Activated B cell treated with CpG ODN at 0.5 μM for 24 hours (primary cell): ENCODE measurements at regions of chr12 and their contacts with region 1.

Region 1: DNA sequence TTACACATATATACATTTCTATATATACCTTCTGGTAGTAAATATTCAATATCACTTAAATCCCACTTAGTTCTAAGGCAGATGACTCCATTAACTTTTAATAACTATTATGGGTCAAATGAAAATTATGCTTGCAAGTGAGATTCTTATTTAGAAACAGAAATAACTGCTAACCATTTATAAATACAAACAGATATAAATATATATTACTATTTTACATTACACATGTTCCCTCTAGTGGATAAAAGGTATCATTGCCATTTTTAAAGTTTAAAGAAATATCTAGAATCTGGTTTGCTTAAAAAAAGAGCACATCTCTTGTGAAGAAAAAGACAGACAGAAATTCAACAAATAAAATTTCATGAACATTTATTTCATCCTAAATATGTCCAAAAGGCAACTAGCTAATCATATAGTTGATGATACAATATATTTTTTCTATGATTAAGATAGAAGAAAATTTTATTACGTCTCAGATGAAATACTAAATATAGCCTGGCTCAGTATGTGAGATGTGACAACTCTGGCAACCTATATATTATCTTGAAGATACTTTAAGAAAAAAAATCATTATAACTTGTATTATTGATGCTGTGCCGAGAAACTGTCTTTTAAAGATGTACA is 11.7 kb upstream of the RAD51AP1 start:
- DNase-seq: no peak
- ATAC-seq: no peak
- H3K4me3 Mint-ChIP-seq: no peak overlapping the region
- H3K27ac Mint-ChIP-seq: no peak overlapping the region
- H3K4me1 Mint-ChIP-seq: no peaks in the 10 kb centered on the region
- H3K27me3 Mint-ChIP-seq: no peaks in the 10 kb centered on the region
- CTCF ChIP-seq: peak; percentile 97

Region 2: DNA sequence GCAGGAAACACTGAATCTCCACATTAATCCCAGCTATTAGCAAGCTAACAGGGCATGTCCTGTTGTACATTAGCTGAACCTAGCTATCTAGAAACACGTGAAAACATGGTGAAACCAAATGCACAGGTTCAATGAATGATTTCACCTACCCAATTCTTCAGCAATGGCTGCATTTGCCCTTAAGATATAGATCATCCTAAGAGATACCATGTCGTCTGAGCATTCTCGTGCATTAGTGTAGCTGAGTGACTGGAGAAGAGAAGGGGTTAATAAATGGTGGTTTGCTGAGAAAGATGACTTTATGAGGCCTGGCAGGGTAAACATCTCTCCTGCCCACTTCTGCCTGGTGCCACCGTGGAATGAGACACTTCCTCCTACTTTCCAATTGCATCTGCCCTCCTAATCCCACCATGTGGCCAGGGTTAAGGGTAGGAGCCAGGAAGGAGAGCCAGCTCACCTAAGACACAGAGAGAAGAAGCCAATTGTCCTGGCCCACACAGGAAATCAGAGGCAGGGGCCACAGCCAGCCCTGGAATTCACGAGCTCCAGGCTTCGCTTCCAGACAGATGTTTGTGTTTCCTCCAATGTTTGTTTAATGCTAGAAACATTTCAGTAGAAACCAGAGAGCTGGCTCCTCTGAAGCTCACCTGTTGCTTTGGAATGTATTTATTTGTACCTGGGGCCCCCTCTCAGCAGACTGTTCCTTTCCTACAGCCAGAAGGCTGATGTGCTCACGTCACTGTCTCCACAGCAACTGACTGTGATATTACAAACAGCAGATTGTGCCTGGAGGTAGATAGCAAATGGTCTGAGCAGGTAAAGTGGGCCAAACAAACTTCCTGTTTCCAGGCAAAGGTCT is 527.8 kb before region 1 on chr12:
- CTCF ChIA-PET with region 1: interaction called, 3 read pairs
- POLR2A ChIA-PET with region 1: no interaction called
- intact Hi-C with region 1: loop called (anchors 5 kb)
- DNase-seq: no peak
- ATAC-seq: no peak
- H3K4me3 Mint-ChIP-seq: no peak overlapping the region
- H3K27ac Mint-ChIP-seq: no peak overlapping the region
- H3K4me1 Mint-ChIP-seq: peaks cover 4% of the 10 kb centered on the region
- H3K27me3 Mint-ChIP-seq: peaks cover 6% of the 10 kb centered on the region
- CTCF ChIP-seq: no peak

Region 3: GRCh38 chr12:4307593-4308333 is 219.3 kb before region 1 on chr12:
- CTCF ChIA-PET with region 1: no interaction called
- POLR2A ChIA-PET with region 1: no interaction called
- intact Hi-C with region 1: loop called (anchors 2 kb)
- DNase-seq: no peak
- ATAC-seq: peak; percentile 68
- H3K4me3 Mint-ChIP-seq: no peak overlapping the region
- H3K27ac Mint-ChIP-seq: no peak overlapping the region
- H3K4me1 Mint-ChIP-seq: no peaks in the 10 kb centered on the region
- H3K27me3 Mint-ChIP-seq: no peaks in the 10 kb centered on the region
- CTCF ChIP-seq: no peak

Region 4: GRCh38 chr12:4356041-4356327 is 171.1 kb before region 1 on chr12:
- CTCF ChIA-PET with region 1: no interaction called
- POLR2A ChIA-PET with region 1: no interaction called
- intact Hi-C with region 1: loop called (anchors 5 kb)
- DNase-seq: no peak
- ATAC-seq: no peak
- H3K4me3 Mint-ChIP-seq: no peak overlapping the region
- H3K27ac Mint-ChIP-seq: no peak overlapping the region
- H3K4me1 Mint-ChIP-seq: no peaks in the 10 kb centered on the region
- H3K27me3 Mint-ChIP-seq: no peaks in the 10 kb centered on the region
- CTCF ChIP-seq: no peak

Region 5: DNA sequence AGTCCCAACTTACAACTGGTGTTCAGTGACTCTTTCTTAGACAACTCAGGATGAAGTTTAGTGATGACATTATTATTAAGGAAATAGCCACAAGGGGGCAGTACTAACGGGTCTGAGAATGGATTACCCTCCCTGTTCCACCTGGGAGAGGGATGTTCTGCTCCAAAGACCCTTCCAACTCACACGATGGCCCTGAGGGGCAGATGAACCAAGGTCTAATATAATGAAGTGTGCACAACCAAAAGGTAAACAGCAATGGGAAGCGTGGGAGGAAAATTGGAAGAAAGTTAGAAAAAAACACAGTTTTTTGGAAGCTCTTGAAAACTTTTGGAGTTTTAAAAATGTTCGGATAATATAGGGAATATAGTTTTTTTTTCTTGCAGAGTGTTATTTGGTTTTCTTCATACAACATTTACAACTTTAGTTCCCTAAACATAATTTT is 105.4 kb before region 1 on chr12:
- CTCF ChIA-PET with region 1: interaction called, 9 read pairs
- POLR2A ChIA-PET with region 1: no interaction called
- intact Hi-C with region 1: loop called (anchors 1 kb)
- DNase-seq: no peak
- ATAC-seq: peak; percentile 31
- H3K4me3 Mint-ChIP-seq: no peak overlapping the region
- H3K27ac Mint-ChIP-seq: no peak overlapping the region
- H3K4me1 Mint-ChIP-seq: no peaks in the 10 kb centered on the region
- H3K27me3 Mint-ChIP-seq: peaks cover 5% of the 10 kb centered on the region
- CTCF ChIP-seq: no peak